B cell (primary cell): ENCODE measurements at regions of chr11 and their contacts with region 1.

Region 1: GRCh38 chr11:66282468-66283386 is 4.8 kb downstream of the CNIH2 start:
- DNase-seq: peak; percentile 100
- ATAC-seq: peak; percentile 78
- H3K4me3 ChIP-seq: no peak overlapping the region
- H3K4me3 Mint-ChIP-seq: peak overlapping the region; percentile 60
- H3K27ac ChIP-seq: peak overlapping the region; percentile 59 to 80
- H3K27ac Mint-ChIP-seq: peak overlapping the region; percentile 95
- H3K4me1 ChIP-seq: peaks cover 22 to 36% of the 10 kb centered on the region in 2 donors
- H3K4me1 Mint-ChIP-seq: peaks cover 38% of the 10 kb centered on the region
- H3K27me3 ChIP-seq: peaks cover 0 to 16% (median 3%) of the 10 kb centered on the region in 4 experiments
- H3K27me3 Mint-ChIP-seq: peaks cover 3% of the 10 kb centered on the region
- CTCF ChIP-seq: peak; percentile 88

Region 2: GRCh38 chr11:66251809-66252208 is 30.9 kb before region 1 on chr11:
- CTCF ChIA-PET with region 1: no interaction called
- POLR2A ChIA-PET with region 1: no interaction called
- intact Hi-C with region 1: no loop called
- DNase-seq: no peak
- ATAC-seq: no peak
- H3K4me3 ChIP-seq: no peak overlapping the region
- H3K4me3 Mint-ChIP-seq: no peak overlapping the region
- H3K27ac ChIP-seq: no peak overlapping the region
- H3K27ac Mint-ChIP-seq: no peak overlapping the region
- H3K4me1 ChIP-seq: peaks cover 5 to 6% of the 10 kb centered on the region in 2 donors
- H3K4me1 Mint-ChIP-seq: peaks cover 9% of the 10 kb centered on the region
- H3K27me3 ChIP-seq: no peaks in the 10 kb centered on the region
- H3K27me3 Mint-ChIP-seq: no peaks in the 10 kb centered on the region
- CTCF ChIP-seq: no peak

Region 3: DNA sequence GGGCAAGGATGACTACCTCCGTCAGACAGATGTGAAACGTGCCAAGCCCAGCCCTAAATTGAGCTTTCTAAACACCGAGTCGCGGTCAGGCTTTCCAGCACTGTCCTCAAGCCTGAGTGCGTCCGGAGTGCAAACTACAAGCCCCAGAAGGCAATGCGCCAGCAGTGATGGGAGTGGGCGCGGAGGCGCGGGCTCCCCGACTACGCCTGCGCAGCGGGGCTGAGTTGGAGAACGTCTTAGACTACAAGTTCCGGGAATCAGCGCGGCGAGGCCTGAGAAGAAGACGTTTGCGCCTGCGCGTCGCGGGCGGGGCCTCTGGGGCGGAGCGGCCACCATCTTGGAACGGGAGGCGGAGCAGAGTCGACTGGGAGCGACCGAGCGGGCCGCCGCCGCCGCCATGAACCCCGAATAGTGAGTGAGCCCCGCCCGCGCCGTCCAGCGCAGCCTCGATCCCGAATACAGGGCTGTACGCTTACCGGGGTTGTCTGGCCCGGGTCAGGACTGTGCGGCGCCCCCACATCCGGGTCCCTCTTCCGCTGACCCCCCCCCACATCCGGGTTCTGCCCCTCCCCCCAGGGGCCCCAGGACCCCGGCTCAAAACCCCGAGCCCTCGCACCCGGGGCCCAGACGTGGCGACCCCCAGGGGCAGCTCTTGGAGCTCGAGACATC is 14.3 kb before region 1 on chr11 and contains the start of gene RAB1B:
- CTCF ChIA-PET with region 1: interaction called, 33 read pairs
- POLR2A ChIA-PET with region 1: interaction called, 11 read pairs
- intact Hi-C with region 1: loop called (anchors 1 kb)
- DNase-seq: peak; percentile 100
- ATAC-seq: peak; percentile 77
- H3K4me3 ChIP-seq: peak within 1 kb of the TSS; percentile 83 to 100 (median 98)
- H3K4me3 Mint-ChIP-seq: peak within 1 kb of the TSS; percentile 95
- H3K27ac ChIP-seq: peak within 1 kb of the TSS; percentile 81 to 97
- H3K27ac Mint-ChIP-seq: peak within 1 kb of the TSS; percentile 96
- H3K4me1 ChIP-seq: peaks cover 14 to 27% of the 10 kb centered on the region in 2 donors
- H3K4me1 Mint-ChIP-seq: peaks cover 29% of the 10 kb centered on the region
- H3K27me3 ChIP-seq: no peaks in the 10 kb centered on the region
- H3K27me3 Mint-ChIP-seq: no peaks in the 10 kb centered on the region
- CTCF ChIP-seq: no peak
- total RNA-seq, gene RAB1B: 76.0 and 77.8 TPM in 2 replicates

Region 4: GRCh38 chr11:66906061-66906735 is 623.5 kb after region 1 on chr11:
- CTCF ChIA-PET with region 1: no interaction called
- POLR2A ChIA-PET with region 1: no interaction called
- intact Hi-C with region 1: no loop called
- DNase-seq: no peak
- ATAC-seq: no peak
- H3K4me3 ChIP-seq: no peak overlapping the region
- H3K4me3 Mint-ChIP-seq: no peak overlapping the region
- H3K27ac ChIP-seq: no peak overlapping the region
- H3K27ac Mint-ChIP-seq: no peak overlapping the region
- H3K4me1 ChIP-seq: no peaks in the 10 kb centered on the region
- H3K4me1 Mint-ChIP-seq: no peaks in the 10 kb centered on the region
- H3K27me3 ChIP-seq: no peaks in the 10 kb centered on the region
- H3K27me3 Mint-ChIP-seq: peaks cover 29% of the 10 kb centered on the region
- CTCF ChIP-seq: no peak